ENCODE measurements at regions of chr12 and their contacts with region 1.

Region 1: GRCh38 chr12:54840317-54840771 is 14.0 kb upstream of the MUCL1 start:
- DNase-seq: no peak
- CTCF ChIP-seq: no peak

Region 2: DNA sequence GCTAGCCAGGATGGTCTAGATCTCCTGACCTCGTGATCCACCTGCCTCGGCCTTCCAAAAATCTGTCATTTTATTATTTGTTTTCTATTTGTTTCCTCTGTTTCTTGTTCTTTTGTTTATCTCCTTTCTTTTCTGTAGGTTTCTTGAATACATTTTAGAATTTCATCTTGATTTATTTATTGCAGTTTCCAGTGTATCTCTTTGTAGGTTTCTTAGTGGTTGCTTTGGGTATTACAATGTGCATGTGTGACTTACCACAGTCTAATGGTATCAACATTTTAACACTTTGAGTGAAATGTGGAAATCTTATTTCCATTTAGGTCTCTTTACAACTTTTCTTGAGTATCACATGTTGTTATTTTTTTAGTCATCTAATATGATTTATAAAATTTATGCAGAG is 15.9 kb before region 1 on chr12:
- CTCF ChIA-PET with region 1: no interaction called
- POLR2A ChIA-PET with region 1: no interaction called
- DNase-seq: no peak
- CTCF ChIP-seq: no peak

Region 3: GRCh38 chr12:54853995-54854566 is 13.7 kb after region 1 on chr12 and contains the start of gene MUCL1:
- CTCF ChIA-PET with region 1: interaction called, 15 read pairs
- POLR2A ChIA-PET with region 1: no interaction called
- DNase-seq: peak; percentile 46
- CTCF ChIP-seq: peak; percentile 83

Measured in GM10248 (cell line).